ENCODE measurements at regions of chr2 and their contacts with region 1.

Region 1: DNA sequence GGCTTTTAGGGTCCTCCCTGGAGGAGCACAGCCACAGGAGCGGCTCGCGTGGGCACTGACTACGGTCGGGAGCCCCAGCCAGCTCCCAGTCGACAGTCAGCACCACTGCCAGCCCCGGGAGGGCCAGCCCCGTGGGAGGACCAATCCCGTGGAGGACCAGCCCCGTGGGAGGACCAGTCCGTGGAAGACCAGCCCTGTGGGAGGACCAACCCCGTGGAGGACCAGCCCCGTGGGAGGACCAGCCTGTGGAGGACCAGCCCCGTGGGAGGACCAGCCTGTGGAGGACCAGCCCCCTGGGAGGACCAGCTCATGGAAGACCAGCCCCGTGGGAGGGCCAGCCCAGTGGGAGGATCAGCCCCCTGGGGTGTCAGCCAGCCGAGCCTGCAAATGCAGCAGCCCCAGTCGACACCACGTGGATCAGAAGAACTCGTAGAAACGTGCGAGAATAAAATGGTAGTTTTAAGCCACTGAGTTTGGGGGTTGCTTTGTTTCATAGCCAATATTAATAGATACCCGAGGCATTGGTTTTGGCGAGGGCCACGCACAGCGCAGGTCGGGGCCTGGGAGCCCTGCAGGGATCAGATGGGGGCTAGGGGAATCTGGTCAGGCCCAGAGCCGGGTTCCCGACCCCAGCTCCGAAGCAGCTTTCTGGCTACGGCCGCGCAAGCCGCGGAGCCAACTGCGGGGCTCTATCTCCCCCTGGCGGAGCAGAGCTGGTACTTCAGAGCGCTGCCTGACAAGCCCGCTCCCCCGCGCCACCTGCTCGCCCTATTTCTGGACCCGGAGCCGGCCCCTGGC is 73.0 kb downstream of the TEX51 start:
- DNase-seq: peak; percentile 77 to 84 (median 80)
- ATAC-seq: peak; percentile 96
- H3K4me3 ChIP-seq: no peak overlapping the region
- H3K27ac ChIP-seq: no peak overlapping the region
- H3K4me1 ChIP-seq: peaks cover 0 to 22% of the 10 kb centered on the region in 2 experiments; a peak in 2 of 5 replicates
- H3K27me3 ChIP-seq: peaks cover 16 to 59% of the 10 kb centered on the region in 2 experiments; a peak in 4 of 5 replicates
- CTCF ChIP-seq: peak; percentile 86 to 92 (median 89)
- EP300 ChIP-seq: no peak
- POLR2A ChIP-seq: no peak
- RAD21 ChIP-seq: peak; percentile 84 to 90

Region 2: GRCh38 chr2:126886211-126886915 is 85.3 kb before region 1 on chr2:
- CTCF ChIA-PET with region 1: no interaction called
- POLR2A ChIA-PET with region 1: no interaction called
- in situ Hi-C with region 1: no loop called
- intact Hi-C with region 1: loop called (anchors 5 kb)
- DNase-seq: peak; percentile 73 to 92 (median 90)
- ATAC-seq: peak; percentile 99
- H3K4me3 ChIP-seq: no peak overlapping the region; the same call in 1 of the 2 replicates
- H3K27ac ChIP-seq: no peak overlapping the region
- H3K4me1 ChIP-seq: peaks cover 0 to 10% of the 10 kb centered on the region in 2 experiments; a peak in 2 of 5 replicates
- H3K27me3 ChIP-seq: peaks cover 7 to 56% of the 10 kb centered on the region in 2 experiments; a peak in 4 of 5 replicates
- CTCF ChIP-seq: peak; percentile 68 to 84 (median 81)
- EP300 ChIP-seq: no peak
- POLR2A ChIP-seq: no peak
- RAD21 ChIP-seq: peak; percentile 28 to 57

Region 3: DNA sequence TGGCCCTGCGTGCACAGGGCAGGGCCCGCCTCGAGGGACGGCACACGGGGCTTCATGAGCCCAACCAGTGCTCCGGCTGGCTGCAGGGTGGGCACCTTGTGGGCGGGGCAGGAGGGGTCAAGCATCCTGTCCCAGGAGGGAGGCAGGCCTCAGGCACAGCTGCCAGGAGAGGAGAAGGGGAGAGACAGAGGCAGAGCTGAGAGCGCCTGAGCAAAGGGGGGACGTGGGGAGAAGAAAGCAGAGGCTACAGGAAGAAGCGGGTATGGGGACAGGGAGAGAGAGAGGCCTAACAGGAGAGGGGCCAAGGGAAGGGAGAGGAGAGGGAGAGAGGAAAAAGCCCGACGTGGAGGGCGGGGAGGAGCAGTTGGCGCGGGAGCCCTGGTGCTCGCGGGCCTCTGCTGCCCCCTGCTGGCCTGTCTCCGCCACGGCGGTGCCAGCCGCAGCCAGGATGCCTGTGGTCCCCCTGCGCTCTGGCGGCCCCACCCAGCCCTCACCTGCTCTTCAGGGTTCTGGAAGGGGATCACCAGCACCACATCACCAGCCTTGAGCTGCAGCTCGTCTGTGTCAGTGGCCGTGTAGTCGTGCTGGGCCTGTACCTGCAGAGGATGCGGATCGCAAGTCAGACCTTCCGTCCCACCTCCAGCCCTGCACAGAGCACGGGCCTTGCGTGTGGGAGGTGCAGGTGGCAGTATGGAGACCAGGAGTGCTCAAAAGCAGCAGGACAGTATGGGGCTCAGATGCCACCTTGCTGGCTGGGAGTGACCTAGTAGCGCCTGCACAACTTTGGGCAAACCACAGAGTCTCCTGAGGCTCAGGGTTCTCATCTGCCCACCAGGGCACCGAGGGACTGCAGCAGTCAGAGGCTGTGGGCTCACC is 78.5 kb after region 1 on chr2:
- CTCF ChIA-PET with region 1: no interaction called
- POLR2A ChIA-PET with region 1: no interaction called
- in situ Hi-C with region 1: no loop called
- intact Hi-C with region 1: loop called (anchors 2 kb)
- DNase-seq: peak; percentile 64 to 88 (median 86)
- ATAC-seq: peak; percentile 90
- H3K4me3 ChIP-seq: no peak overlapping the region
- H3K27ac ChIP-seq: no peak overlapping the region
- H3K4me1 ChIP-seq: peaks cover 0 to 57% of the 10 kb centered on the region in 2 experiments; a peak in 2 of 5 replicates
- H3K27me3 ChIP-seq: peaks cover 7 to 87% of the 10 kb centered on the region in 2 experiments; a peak in 4 of 5 replicates
- CTCF ChIP-seq: peak; percentile 84 to 90 (median 86)
- EP300 ChIP-seq: no peak
- POLR2A ChIP-seq: no peak
- RAD21 ChIP-seq: peak; percentile 72 to 86

Measured in K562 (cell line).